ENCODE measurements at regions of chr3 and their contacts with region 1.

Region 1: DNA sequence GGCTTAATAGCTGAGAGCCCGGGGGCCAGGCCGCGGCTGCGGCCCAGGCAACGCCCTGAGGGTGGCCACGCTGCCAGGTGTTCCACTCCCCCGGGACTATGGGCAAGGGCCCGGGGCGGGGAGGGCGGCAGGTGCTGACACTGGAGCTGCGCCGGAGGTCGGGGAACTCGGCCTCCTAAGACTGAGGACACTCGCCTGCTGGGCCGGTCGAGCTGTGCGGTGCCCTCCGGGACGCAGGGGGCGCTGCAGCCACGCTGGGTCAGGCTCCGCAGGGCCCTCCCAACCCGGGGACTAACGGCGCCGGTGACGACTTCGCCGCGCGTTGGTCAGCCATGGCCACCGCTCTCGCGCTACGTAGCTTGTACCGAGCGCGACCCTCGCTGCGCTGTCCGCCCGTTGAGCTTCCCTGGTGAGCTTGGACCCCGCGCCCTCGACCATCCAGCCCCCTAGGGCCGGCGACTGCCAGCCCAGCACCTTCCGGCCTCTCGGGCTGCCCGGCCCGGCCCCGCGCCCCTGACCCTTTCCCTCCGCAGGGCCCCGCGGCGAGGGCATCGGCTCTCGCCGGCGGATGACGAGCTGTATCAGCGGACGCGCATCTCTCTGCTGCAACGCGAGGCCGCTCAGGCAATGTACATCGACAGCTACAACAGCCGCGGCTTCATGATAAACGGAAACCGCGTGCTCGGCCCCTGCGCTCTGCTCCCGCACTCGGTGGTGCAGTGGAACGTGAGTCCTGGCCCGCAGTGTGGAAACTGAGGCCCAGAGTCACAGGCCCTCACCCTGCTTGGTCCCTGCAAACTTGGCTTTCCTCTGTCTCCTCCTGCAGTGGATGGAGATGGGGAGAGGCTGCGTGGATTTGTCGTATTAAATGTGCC is at the start of gene NDUFAF3:
- DNase-seq: peak; percentile 90
- CTCF ChIP-seq: peak; percentile 99

Region 2: DNA sequence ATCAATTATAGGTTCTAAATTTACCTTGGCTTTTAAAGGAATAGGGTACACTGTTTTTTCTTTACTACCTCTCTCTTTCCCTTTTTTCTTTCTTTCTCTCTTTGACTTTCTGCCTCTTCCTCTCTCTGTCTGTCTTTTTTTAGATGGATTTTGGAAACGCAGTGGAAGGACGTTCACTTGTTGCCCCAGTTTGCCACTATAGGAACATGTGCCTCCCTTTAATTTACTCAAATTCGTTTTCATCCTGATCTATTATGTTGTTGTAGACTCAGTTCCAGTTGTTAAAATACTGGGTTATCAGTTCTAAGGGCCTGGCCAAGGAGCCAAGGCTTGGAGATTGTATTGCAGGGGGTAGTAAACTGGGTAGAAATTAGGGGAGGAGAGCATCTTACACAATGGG is 687.4 kb before region 1 on chr3:
- CTCF ChIA-PET with region 1: no interaction called
- POLR2A ChIA-PET with region 1: no interaction called
- DNase-seq: no peak
- CTCF ChIP-seq: no peak

Region 3: GRCh38 chr3:49007068-49007770 is 14.8 kb before region 1 on chr3 and contains the start of gene WDR6:
- CTCF ChIA-PET with region 1: interaction called, 131 read pairs
- POLR2A ChIA-PET with region 1: interaction called, 50 read pairs
- DNase-seq: peak; percentile 98
- CTCF ChIP-seq: peak; percentile 50

Region 4: DNA sequence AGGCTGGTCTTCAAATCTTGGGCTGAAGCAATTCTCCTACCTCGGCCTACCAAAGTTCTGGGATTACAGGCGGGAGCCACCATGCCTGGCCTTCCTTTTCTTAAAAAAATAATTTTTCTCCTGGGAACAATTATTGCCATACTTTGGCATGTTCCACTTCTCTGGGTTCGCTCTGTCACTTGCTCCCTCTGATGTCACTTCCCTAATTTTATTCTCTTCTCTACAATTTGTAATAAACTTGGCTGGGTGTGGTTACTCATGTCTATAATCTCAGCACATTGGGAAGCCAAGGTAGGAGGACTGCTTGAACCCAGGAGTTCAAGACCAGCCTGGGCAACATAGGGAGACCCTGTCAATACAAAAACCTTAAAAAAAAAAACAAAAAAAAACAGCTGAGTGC is 13.2 kb after region 1 on chr3:
- CTCF ChIA-PET with region 1: interaction called, 19 read pairs
- POLR2A ChIA-PET with region 1: interaction called, 5 read pairs
- DNase-seq: no peak
- CTCF ChIP-seq: no peak

Measured in GM10248 (cell line).